ENCODE measurements at regions of chr20 and their contacts with region 1.

Region 1: DNA sequence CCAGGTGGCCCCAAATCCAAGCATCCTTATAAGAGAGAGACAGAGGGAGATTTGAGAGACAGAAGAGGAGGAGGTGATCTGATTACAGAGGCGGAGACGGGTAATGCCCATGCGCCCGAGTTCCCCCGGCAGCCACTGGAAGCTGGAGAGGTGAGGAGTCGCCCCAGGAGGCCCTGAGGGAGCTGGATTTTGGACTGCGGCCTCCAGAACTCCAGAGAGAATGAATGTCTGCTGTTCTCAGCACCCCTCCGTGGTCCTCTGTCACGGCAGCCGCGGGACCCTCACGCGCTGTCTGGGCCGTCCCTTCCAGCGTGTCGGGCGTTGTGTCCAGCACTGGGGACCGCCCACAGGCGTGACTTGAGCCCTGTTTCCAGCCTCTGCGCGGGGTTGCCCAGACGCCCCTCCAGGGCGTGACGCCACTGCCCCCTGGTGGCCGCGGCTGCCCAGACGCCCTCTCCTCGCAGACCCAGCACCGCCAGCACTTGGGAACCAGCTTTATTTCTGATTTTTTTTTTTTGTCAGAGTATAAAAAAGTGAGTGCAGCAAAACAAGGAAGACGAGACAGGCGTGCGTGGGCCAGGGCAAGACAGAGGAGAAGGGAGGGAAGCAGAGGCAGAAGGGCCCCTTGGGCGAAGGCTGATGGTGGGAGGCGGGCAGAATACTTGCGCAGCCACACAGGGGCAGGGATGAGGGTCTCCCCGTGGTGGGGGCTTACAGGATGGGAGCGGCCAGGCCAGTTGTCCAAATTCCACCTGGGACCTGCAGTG is 4.1 kb upstream of the ZNF512B start:
- DNase-seq: peak in 1 of 2 donors; percentile 83
- H3K4me3 ChIP-seq: peak overlapping the region in 1 of 2 donors; percentile 29
- H3K27ac ChIP-seq: peak overlapping the region; percentile 49
- H3K4me1 ChIP-seq: peaks cover 42% of the 10 kb centered on the region
- H3K27me3 ChIP-seq: no peaks in the 10 kb centered on the region
- CTCF ChIP-seq: peak; percentile 93 to 97 (median 95)
- POLR2A ChIP-seq: no peak

Region 2: DNA sequence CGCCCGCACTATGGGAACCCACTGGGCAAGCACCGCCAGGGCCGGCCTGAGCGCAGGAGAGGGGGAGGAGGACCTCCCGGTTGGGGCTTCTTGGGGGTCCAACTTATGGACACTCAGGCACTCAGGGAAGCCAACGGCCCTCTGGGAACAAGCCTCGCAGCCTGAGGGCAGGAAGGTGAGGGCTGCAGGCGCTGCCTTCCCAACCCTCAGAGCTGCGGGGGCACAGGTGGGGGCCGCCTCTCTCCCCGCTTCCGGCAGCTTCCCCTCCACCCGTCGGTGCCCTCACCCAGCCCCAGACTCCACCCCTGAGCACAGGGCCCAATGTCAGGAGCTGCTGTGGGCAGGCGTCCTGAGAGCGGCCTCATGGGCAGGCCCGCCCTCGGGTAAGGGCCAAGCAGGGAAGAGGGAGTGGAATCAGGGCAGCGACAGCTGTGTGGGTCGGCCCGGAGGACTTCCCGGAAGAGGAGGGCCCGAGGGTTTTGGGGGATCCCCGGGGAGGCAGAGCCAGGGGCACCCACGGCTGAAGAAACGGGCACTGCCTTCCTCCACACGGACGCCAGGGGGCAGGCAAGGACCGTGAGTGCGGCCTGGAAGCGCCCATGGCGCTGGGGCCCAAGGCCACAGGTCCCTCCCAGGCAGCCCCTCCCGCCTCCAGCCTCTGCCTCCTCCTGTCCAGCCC is 436.2 kb before region 1 on chr20:
- intact Hi-C with region 1: loop called (anchors 2 kb)
- DNase-seq: no peak
- H3K4me3 ChIP-seq: peak overlapping the region; percentile 28 to 42
- H3K27ac ChIP-seq: peak overlapping the region; percentile 65
- H3K4me1 ChIP-seq: peaks cover 47% of the 10 kb centered on the region
- H3K27me3 ChIP-seq: no peaks in the 10 kb centered on the region
- CTCF ChIP-seq: peak; percentile 82 to 99 (median 96)
- POLR2A ChIP-seq: no peak

Region 3: GRCh38 chr20:63934271-63935068 is 39.3 kb before region 1 on chr20:
- intact Hi-C with region 1: no loop called
- DNase-seq: no peak
- H3K4me3 ChIP-seq: no peak overlapping the region
- H3K27ac ChIP-seq: no peak overlapping the region
- H3K4me1 ChIP-seq: no peaks in the 10 kb centered on the region
- H3K27me3 ChIP-seq: no peaks in the 10 kb centered on the region
- CTCF ChIP-seq: no peak
- POLR2A ChIP-seq: no peak